Head of caudate nucleus (tissue), 42 donors: ENCODE measurements at regions of chr9 and their contacts with region 1.

Region 1: DNA sequence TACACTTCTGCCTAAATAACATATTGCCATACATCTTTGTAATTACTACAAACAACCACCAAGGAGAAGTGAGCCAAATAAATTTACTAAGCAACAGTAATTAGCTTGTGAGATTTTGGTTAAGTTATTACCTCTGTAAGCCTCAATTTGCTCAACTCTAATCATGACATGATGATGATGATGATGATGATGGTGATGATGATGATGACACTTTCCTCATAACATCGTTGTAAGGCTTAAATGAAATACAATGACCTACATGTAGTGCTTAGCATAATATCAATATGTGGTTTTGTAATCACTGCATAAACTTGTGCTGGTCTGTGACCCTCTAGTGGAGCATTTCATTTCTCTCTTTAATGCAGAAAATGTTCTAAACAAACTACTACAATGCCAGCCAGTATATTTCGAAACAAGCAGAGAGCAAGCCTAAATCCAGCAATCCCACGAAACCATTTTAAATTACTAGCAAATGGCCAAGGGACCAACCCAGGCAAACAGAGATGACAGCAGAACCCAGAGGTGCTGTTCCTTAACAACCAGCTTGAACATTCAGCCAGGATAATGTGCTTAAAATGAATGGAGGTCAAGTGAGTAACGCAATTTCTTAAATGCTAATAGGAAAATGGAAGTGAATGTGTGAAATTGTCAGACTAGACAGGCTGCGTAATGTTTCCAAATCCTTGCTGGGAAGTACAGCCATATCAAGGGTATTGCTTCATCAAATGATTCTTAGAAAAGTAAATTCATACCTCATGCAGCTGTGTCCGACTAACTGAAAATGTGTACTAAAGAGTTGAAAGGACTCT is 281.9 kb upstream of the PUM3 start:
- DNase-seq: no peak

Region 2: DNA sequence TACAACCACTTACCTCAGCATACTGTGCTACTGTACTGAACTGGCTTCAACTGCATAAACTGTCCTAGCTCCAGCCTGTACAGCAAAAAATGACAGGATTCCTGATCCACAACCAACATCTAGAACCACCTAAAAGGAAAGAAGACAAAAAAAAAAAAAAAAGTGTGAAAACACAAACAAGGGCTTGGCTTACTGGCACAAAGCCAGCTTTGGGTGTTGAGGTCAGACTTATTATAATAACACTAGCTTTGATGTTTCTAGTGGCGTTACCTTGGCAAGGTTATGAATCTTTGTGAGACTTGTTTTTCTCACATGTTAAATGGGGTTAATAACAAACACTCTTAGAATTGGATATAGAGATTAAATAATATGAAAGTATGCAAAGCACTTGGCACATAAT is 133.4 kb before region 1 on chr9:
- intact Hi-C with region 1: no loop called
- DNase-seq: no peak

Region 3: GRCh38 chr9:3074247-3074646 is 51.6 kb before region 1 on chr9:
- intact Hi-C with region 1: loop called (anchors 5 kb)
- DNase-seq: no peak

Region 4: GRCh38 chr9:3271581-3271980 is 145.8 kb after region 1 on chr9:
- intact Hi-C with region 1: no loop called
- DNase-seq: no peak